Psoas muscle (tissue), 8 donors: ENCODE measurements at regions of chr2 and their contacts with region 1.

Region 1: DNA sequence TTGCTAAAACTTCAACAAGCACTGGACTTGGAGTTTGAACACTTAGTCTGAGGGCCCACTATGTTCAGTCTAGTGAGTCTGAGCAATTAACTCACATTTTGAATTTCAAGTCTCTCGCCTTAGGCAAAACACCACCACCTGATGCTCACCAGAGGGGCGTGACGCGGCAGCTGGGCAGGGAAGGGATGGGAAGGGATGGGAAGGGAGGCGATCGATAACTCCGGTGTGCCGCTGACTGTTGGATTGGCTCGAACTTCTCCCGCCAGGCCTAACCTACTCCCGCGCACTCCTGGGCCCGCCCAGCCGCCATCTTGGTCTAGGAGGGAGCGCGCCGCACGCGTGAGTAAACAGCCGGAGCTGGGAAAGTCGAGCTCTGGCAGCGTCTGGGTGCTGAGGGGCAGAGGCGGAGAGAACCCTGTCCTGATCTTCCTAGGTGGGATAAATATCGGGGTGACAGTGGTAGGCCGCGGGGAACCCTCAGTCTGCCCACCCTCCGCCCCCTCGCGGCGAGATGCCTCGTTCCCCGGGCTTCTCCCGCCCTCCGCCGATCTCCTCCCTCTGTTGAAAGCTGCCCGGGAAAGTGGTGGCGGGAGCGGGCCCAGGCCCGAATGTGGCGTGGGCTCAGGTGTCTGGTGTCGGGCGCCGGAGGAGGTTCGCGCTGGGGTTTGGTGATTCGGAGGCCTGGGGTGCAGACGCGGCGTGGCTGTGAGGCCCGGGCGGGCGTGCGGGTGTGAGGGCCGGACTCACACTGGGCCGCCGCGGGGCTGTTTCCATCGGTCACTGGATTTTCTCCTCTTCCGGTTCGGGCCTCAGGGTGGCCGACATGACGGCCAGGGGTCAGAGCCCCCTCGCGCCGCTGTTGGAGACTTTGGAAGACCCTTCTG is at the start of gene RIF1:
- DNase-seq: peak; percentile 90 to 94
- ATAC-seq: peak; percentile 94 to 98 (median 98)
- H3K4me3 ChIP-seq: peak within 1 kb of the TSS; percentile 89
- H3K27ac ChIP-seq: peak within 1 kb of the TSS; percentile 92
- H3K4me1 ChIP-seq: no peaks in the 10 kb centered on the region
- H3K27me3 ChIP-seq: no peaks in the 10 kb centered on the region
- CTCF ChIP-seq: peak; percentile 70
- total RNA-seq, gene RIF1: 17.5 to 35.0 (median 22.5) TPM

Region 2: DNA sequence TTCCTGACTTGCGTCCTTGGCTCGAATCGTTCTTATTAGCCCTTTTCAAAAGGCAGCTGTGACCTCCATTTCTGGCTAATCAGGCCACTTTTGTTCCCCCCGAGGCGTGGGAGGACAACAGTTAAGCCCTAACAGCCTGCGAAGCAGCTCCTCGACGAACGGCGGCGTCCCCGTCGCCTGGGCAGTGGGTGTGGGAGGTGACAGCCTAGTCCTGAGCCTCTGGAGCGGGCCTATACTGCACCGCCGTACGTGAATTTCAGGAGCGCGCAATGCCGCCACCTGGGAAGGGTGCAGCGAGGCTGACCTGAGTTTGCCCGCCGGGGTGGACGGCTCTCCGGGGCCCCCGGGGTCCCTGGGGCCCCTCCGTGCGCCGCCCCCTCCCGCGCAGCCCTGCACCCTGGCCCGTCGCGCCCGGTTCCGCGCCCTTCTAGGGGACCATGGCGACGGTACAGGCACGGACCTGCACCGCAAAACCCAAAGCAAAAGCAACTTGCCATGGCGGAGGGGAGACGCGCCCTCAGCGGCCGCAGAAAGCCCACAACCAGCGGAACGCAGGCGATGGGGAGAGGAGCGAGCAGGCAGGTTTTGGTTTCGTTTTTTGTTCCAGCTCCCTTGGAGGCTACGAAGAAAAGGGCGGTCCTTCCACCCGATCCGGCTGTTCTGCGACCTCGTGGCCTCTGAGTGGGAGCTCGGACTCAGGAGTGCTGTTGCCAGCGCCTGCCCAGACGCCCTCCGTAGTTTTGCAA is 148.4 kb before region 1 on chr2 and contains the start of gene RBM43:
- intact Hi-C with region 1: loop called in 1 of 2 experiments (anchors 5 kb)
- DNase-seq: peak; percentile 92 to 95
- ATAC-seq: peak; percentile 91 to 95 (median 94)
- H3K4me3 ChIP-seq: peak within 1 kb of the TSS; percentile 96
- H3K27ac ChIP-seq: peak within 1 kb of the TSS; percentile 90
- H3K4me1 ChIP-seq: peaks cover 4% of the 10 kb centered on the region
- H3K27me3 ChIP-seq: no peaks in the 10 kb centered on the region
- CTCF ChIP-seq: peak; percentile 6
- total RNA-seq, gene RBM43: 0.68 to 3.1 (median 1.1) TPM

Region 3: GRCh38 chr2:151638191-151638933 is 228.5 kb after region 1 on chr2:
- intact Hi-C with region 1: no loop called
- DNase-seq: no peak
- ATAC-seq: peak; percentile 53 to 69 (median 65)
- H3K4me3 ChIP-seq: no peak overlapping the region
- H3K27ac ChIP-seq: peak overlapping the region; percentile 74
- H3K4me1 ChIP-seq: peaks cover 24% of the 10 kb centered on the region
- H3K27me3 ChIP-seq: no peaks in the 10 kb centered on the region
- CTCF ChIP-seq: no peak